Activated CD4-positive, alpha-beta T cell treated with anti-CD3 and anti-CD28 coated beads for 36 hours (primary cell): ENCODE measurements at regions of chr12 and their contacts with region 1.

Region 1: GRCh38 chr12:39103552-39104165 is 198.3 kb upstream of the CPNE8 start:
- DNase-seq: peak; percentile 10
- ATAC-seq: peak; percentile 81
- H3K4me3 Mint-ChIP-seq: no peak overlapping the region
- H3K27ac Mint-ChIP-seq: no peak overlapping the region
- H3K4me1 Mint-ChIP-seq: no peaks in the 10 kb centered on the region
- H3K27me3 Mint-ChIP-seq: peaks cover 2% of the 10 kb centered on the region

Region 2: DNA sequence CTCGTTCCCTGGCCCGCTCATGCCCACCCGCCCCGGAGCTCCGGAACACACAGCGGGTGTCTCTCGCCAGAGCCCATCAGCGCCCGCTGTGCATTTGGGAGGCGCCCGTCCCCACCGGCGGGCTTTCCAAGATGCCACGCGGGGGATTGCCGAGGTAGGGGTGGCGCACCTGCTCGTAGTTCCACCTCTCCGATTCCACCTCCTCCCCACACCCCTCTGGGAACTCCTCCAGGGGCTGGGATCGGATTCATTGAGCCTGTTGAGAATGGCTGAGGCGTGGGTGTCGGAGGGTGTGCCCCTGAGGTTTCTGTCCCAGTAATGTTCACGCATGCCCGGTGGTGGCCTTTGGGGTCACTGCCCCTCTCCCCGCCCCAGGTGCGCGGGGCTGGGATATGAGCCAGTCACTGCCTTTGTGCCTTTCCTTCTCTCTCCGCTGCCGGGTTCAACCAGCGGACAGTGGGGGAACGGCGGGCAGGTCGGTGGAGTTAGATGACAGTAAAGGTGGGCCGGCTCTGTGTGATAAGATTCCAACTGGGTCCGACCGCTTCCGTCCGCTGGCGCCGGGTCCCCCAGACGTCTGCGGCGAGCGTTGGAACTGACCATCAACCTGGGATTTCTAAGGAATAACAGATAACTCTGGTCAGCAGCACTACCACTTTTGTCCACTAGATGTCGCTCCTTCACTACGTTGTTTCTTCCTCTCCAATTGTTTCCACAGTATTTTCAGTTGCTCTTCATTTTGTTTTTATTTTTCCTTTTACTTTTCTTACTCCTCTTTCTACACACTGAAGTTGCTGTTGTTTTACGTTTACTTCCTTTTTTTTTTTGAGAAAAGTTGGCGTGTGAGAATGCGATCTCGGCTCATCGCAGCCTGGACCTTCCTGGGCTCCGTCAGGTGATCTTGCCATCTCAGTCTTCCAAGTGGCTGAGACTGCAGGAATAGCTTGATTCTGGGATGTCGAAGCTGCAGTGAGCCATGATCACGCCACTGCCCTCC is 965.1 kb before region 1 on chr12:
- CTCF ChIA-PET with region 1: no interaction called
- POLR2A ChIA-PET with region 1: no interaction called
- intact Hi-C with region 1: loop called in 1 of 2 experiments (anchors 5 kb)
- DNase-seq: peak; percentile 76
- ATAC-seq: peak; percentile 66
- H3K4me3 Mint-ChIP-seq: peak overlapping the region; percentile 61
- H3K27ac Mint-ChIP-seq: peak overlapping the region; percentile 27
- H3K4me1 Mint-ChIP-seq: peaks cover 6% of the 10 kb centered on the region
- H3K27me3 Mint-ChIP-seq: peaks cover 10% of the 10 kb centered on the region

Region 3: GRCh38 chr12:38332814-38333213 is 770.8 kb before region 1 on chr12:
- CTCF ChIA-PET with region 1: interaction called, 7 read pairs
- POLR2A ChIA-PET with region 1: no interaction called
- intact Hi-C with region 1: loop called (anchors 1 kb)
- DNase-seq: no peak
- ATAC-seq: no peak
- H3K4me3 Mint-ChIP-seq: no peak overlapping the region
- H3K27ac Mint-ChIP-seq: no peak overlapping the region
- H3K4me1 Mint-ChIP-seq: no peaks in the 10 kb centered on the region
- H3K27me3 Mint-ChIP-seq: no peaks in the 10 kb centered on the region

Region 4: DNA sequence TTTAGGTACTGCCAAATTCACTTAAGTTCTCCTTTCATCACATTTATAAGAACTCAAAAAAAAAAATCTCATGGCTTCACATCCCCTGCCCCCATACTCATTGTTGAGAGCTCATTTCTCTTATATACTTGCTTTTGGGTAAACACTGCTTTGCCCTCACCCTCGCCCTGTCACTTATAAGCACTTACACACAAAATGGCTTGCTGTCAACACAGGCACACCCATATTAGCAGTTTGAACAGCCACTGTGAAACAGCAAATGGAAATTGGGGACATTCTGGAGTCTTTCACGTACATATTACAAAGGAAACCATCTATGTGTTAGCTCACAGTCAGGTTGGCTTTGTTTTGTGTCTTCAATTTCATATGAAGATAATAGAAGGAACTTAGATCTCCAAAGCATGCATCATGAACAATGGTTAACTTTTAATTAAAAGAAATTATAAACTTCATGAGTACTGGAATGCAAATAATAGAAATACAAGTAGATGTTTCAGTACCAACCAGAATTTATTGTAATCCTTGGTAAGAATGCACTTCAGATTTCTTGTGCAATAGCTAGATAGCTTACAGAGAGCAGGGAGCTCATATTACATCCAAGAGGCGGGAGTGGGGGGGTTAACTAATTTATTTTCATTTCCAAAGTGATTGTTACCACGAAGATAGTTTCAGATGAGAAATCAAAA is 514.9 kb before region 1 on chr12:
- CTCF ChIA-PET with region 1: no interaction called
- POLR2A ChIA-PET with region 1: no interaction called
- intact Hi-C with region 1: no loop called
- DNase-seq: no peak
- ATAC-seq: no peak
- H3K4me3 Mint-ChIP-seq: no peak overlapping the region
- H3K27ac Mint-ChIP-seq: no peak overlapping the region
- H3K4me1 Mint-ChIP-seq: no peaks in the 10 kb centered on the region
- H3K27me3 Mint-ChIP-seq: no peaks in the 10 kb centered on the region

Region 5: GRCh38 chr12:38664661-38665269 is 438.9 kb before region 1 on chr12:
- CTCF ChIA-PET with region 1: no interaction called
- POLR2A ChIA-PET with region 1: no interaction called
- intact Hi-C with region 1: loop called in 1 of 2 experiments (anchors 10 kb)
- DNase-seq: peak; percentile 6
- ATAC-seq: no peak
- H3K4me3 Mint-ChIP-seq: no peak overlapping the region
- H3K27ac Mint-ChIP-seq: no peak overlapping the region
- H3K4me1 Mint-ChIP-seq: no peaks in the 10 kb centered on the region
- H3K27me3 Mint-ChIP-seq: no peaks in the 10 kb centered on the region

Region 6: DNA sequence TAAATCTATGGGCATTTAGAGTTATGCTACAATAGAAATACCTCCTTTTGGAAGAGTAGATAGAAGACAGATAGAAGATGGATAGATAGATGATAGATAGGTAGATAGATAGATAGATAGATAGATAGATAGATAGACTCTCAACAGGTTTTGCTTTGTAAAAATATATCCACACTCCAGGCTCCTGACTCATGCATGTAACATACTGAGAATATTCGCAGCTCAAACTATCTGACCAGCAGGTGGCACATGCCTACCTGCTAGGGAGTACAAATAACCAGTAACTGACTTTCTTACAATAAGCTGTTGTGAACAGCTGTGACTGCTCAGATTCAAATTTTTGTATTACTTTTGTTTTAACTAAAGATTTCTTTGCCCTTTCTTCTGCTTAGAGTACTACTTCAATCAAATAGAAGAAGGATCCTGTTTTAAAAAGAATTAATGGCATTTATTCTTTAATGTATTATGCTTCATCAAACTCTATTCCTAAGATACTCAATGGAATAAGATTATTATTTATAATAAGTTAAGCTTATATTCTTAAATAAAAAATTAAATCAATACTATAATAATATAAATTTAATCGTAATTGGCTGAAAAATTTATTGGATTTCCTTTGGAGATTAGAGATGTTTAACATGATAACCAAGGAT is 182.5 kb before region 1 on chr12:
- CTCF ChIA-PET with region 1: interaction called, 23 read pairs
- POLR2A ChIA-PET with region 1: no interaction called
- intact Hi-C with region 1: loop called (anchors 1 to 2 kb)
- DNase-seq: peak; percentile 61
- ATAC-seq: peak; percentile 51
- H3K4me3 Mint-ChIP-seq: no peak overlapping the region
- H3K27ac Mint-ChIP-seq: no peak overlapping the region
- H3K4me1 Mint-ChIP-seq: no peaks in the 10 kb centered on the region
- H3K27me3 Mint-ChIP-seq: peaks cover 6% of the 10 kb centered on the region

Region 7: DNA sequence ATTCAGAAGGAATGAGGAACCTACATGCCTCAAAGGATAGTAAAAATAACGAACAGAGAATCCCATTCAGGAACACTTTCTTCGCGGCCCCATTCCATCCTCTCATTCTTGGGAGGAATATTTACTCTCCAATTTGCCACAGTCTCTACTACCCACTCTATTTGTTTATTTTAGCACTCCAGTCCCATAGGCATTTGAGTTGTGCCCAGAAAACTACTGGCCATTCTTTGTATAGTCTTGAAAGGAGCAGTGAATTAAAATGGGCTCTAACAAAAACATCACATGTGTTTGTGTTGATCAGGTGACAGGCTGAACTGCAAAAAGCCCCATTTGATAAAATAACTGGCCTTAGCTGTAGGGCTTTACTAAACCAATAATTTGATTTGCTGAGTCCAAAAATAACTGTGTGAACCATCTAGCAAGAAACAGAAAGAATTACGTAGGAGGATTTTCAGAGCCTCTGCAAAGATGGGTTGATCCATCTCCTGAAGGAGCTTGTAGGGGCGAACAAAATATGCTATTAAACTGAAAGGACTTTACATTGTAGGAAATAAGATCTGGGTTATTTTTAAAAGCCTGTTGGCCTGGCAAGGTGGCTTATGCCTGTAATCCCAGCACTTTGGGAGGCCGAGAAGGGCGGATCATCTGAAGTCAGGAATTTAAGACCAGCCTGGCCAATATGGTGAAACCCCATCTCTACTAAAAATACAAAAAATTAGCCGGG is 56.0 kb before region 1 on chr12:
- CTCF ChIA-PET with region 1: no interaction called
- POLR2A ChIA-PET with region 1: no interaction called
- intact Hi-C with region 1: no loop called
- DNase-seq: no peak
- ATAC-seq: no peak
- H3K4me3 Mint-ChIP-seq: no peak overlapping the region
- H3K27ac Mint-ChIP-seq: no peak overlapping the region
- H3K4me1 Mint-ChIP-seq: no peaks in the 10 kb centered on the region
- H3K27me3 Mint-ChIP-seq: no peaks in the 10 kb centered on the region